GM13977 (cell line): ENCODE measurements at regions of chr2 and their contacts with region 1.

Region 1: DNA sequence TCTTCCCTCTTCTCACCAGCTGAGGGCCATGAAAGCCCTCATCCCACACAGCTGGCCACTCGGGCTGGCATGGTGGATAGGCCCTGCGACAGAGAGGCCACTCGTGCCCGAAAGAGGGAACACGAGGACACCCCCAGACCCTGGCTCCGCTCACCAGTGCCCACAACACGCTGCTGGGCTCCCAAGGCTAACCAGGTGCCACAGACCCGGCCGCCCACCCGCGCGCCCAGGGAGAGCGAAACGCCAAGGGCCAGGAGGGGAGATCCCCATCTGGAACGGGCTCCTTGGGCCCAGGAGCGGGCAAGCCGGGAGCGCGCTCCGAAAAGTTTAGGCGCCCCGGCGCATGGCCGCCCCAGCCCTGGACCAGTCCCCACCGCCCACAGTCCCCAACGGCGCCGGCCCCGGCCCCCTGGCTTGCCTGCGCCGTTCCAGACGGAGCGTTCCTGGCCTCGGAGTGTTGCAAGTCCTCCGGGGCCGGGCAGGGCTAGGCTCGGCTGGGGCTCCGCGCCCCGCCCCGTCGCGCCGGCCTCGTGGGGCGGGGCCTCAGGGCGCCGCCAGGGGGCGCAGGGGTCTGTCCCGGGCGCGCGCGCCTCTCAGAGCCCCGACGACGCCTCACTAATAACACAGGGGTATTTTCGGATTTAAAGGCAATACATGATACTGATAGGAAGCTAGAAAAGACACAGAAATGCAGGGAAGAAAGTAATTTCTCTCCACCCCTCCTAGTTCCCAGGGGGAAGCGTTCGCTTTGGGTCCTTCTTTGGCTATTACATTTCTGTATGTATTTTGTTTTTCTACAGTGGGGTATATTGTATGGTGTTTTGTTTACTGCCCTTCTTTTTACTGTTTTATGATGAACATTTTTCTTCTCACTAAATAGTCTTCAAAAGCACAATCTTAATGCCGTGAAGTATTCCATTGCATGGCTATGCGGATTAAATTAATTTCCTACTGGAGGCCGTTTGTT is at the start of gene TMBIM1:
- DNase-seq: peak; percentile 94
- CTCF ChIP-seq: peak; percentile 93

Region 2: DNA sequence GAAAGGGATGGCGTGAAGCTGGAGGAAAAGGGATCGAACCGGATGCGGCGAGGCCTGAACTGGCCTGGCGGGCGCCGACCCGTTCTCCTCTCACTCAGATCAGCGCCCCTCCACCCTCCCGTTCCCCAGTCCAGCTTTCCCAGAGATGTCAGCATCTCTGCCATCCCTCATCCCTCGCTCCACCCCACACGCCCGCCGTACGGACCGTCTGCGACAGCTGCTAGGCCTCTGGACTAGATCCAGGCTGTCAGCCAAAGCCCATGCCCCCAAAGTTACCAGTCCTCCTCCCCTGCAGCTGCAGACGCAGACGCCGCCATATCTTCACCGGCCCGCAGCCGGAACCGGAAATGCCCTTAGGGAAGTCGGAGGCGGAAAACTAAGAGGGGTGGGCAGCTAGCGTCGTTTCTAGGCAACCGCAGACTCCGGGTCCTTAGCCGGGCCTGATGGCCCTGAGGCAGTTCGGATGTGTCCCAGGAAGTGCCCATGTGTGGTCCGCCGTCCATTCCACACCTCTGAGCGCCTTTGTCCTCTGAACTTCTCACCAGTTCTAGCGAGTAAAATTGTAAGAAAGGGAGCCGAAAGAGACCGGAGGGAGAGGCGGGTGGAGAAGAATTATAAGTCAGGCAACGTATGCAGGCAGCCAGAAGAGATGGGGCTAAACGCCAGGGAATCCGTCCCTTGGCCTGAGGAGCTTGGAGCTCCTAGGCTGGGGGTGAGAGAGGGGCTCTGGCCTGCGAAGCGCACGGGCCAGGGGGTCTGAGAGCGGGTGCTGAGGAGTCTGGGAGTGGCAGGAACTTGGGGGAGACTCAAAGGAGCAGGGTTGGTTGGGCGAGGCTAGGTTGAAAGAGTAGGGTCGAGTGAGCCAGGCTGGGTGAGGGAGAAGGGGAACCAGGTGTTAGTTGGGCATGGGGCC is 379.6 kb after region 1 on chr2 and contains the starts of genes RNF25 and STK36:
- in situ Hi-C with region 1: loop called (anchors 25 kb)
- DNase-seq: peak; percentile 89
- CTCF ChIP-seq: no peak